GM13976 (cell line): ENCODE measurements at regions of chr16 and their contacts with region 1.

Region 1: DNA sequence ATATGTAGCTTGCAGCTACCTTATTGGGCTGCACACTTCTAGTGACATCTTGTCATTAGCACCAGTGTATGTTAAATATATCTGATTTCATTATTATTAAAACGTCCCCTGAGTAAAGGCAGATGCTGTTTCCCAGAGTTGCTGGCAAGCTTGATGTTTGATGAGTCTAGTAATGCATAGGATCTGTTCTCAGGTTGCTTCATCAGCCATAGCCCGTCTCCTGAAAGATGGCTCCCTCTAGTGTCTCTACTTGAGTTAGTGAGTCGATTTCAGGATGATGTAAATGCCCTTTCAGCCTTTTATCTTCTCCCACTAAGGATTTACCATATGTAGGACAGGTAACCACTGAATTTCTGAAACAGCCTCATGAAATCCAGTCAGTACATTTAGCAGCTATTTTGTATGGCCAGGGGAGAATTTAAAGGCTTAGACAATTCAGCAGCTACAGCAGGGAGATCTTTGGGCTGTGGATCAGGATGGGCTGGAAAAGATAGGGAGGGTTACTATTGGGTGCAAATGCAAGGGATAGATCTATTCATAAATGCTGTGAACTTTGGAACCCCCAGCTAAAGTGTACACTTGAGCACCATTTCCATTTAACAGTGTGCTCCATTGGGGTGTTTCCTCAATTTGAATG is 376.3 kb downstream of the CNTNAP4 start:
- DNase-seq: peak; percentile 20
- CTCF ChIP-seq: peak; percentile 53

Region 2: GRCh38 chr16:75789237-75789636 is 864.3 kb before region 1 on chr16:
- in situ Hi-C with region 1: loop called (anchors 10 kb)
- DNase-seq: peak; percentile 71
- CTCF ChIP-seq: peak; percentile 49

Region 3: DNA sequence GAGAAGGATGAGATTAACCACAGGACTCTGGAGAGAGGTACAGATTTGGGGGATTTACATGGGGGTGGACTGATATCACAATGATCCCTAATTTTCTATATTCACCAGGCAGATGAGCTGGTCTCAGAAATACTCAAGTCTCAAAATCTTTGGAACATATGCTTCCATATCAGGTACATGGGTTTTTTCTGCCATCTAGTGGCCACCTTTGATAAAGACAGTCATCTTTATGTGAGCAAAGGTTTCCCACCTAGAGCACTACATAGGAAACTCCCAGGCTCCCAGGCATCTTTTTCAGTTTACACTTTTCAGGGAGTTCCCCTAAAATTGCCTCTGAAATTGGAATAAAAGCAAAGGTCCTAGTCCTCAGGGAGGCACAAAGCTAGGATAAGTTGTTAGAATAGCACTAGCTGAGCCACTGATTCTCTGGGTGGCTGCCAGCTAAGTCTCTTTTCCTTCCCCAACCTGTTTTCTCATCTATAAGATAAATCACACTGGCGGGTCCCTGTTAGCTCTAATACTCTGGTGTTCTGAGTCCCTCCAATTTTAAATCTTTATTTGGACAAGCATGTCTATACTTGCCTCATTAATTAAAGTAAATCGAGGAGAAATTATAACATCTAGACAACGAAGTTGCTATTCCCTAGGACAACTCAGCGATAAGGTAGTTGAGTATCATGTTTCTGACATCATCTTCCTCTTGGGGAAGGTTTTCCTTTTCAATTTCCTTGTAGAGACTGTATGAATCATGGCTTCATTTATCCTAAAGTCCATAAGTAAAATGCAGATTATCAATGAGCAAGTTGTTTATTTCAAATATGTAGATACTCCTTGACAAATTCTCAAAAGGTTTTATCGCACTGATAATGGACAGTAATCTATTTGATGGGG is 518.5 kb after region 1 on chr16:
- in situ Hi-C with region 1: loop called (anchors 25 kb)
- DNase-seq: peak; percentile 53
- CTCF ChIP-seq: peak; percentile 62